ENCODE measurements at regions of chr1 and their contacts with region 1.

Region 1: GRCh38 chr1:182962554-182963115 is 9.7 kb upstream of the SHCBP1L start:
- DNase-seq: peak; percentile 81
- ATAC-seq: peak; percentile 100
- H3K4me3 ChIP-seq: peak overlapping the region in 4 of 5 experiments; percentile 3 to 48 (median 25)
- H3K4me3 Mint-ChIP-seq: peak overlapping the region; percentile 54
- H3K27ac ChIP-seq: no peak overlapping the region
- H3K27ac Mint-ChIP-seq: peak overlapping the region; percentile 64
- H3K4me1 ChIP-seq: peaks cover 5 to 7% of the 10 kb centered on the region in 2 donors
- H3K4me1 Mint-ChIP-seq: peaks cover 8% of the 10 kb centered on the region
- H3K27me3 ChIP-seq: peaks cover 0 to 5% (median 0%) of the 10 kb centered on the region in 4 experiments
- H3K27me3 Mint-ChIP-seq: peaks cover 4% of the 10 kb centered on the region
- CTCF ChIP-seq: peak; percentile 89

Region 2: DNA sequence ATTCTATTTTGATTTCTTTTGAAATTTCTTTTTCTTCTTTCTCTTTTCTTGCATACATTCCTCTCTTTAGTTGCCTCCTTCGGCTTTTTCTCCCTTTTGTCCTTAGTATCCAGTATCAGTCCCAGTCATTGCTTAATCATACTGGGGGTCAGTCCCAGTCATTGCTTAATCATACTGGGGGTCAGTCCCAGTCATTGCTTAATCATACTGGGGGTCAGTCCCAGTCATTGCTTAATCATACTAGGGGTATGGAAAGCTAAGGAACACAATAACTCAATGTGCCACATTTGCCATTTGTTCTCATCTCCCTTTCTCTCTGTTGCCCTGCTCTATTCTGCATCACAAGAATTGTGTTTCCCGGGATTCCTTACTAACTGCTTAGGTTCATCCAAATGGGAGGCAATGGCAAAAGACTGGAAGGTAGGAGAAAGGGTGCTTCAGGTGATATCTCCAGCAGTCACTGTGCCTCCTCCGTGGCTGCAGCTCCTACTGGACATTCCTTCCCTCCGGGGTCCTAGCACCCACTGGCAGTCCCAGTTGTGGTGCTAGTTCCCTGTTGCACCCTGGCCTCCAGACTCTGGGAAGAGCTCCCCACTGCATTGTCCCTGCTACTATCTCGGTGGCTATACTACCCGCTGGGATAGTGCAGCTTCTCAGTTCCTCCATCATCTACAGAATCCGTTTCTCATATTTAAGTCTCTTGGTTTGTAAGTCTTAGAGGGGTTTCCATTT is 27.9 kb after region 1 on chr1:
- CTCF ChIA-PET with region 1: no interaction called
- POLR2A ChIA-PET with region 1: no interaction called
- intact Hi-C with region 1: no loop called
- DNase-seq: no peak
- ATAC-seq: no peak
- H3K4me3 ChIP-seq: no peak overlapping the region
- H3K4me3 Mint-ChIP-seq: no peak overlapping the region
- H3K27ac ChIP-seq: no peak overlapping the region
- H3K27ac Mint-ChIP-seq: no peak overlapping the region
- H3K4me1 ChIP-seq: no peaks in the 10 kb centered on the region
- H3K4me1 Mint-ChIP-seq: no peaks in the 10 kb centered on the region
- H3K27me3 ChIP-seq: peaks cover 0 to 8% (median 4%) of the 10 kb centered on the region in 4 experiments
- H3K27me3 Mint-ChIP-seq: peaks cover 24% of the 10 kb centered on the region
- CTCF ChIP-seq: no peak

Region 3: DNA sequence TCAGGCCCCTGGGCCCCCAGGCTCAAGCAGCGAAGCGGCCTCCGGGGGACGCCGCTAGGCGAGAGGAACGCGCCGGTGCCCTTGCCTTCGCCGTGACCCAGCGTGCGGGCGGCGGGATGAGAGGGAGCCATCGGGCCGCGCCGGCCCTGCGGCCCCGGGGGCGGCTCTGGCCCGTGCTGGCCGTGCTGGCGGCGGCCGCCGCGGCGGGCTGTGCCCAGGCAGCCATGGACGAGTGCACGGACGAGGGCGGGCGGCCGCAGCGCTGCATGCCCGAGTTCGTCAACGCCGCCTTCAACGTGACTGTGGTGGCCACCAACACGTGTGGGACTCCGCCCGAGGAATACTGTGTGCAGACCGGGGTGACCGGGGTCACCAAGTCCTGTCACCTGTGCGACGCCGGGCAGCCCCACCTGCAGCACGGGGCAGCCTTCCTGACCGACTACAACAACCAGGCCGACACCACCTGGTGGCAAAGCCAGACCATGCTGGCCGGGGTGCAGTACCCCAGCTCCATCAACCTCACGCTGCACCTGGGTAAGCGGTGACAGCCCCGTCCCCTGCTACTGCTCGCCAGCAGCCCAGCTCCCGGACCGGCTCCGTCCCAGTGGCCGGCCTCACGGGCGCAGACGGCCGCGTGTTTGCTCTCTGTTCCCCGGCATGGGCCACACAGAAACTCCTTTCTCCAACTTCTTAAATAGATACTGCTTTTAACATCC is 61.1 kb after region 1 on chr1:
- CTCF ChIA-PET with region 1: interaction called, 19 read pairs
- POLR2A ChIA-PET with region 1: no interaction called
- intact Hi-C with region 1: loop called (anchors 1 kb)
- DNase-seq: peak; percentile 84
- ATAC-seq: peak; percentile 73
- H3K4me3 ChIP-seq: peak overlapping the region; percentile 45 to 82 (median 68)
- H3K4me3 Mint-ChIP-seq: peak overlapping the region; percentile 99
- H3K27ac ChIP-seq: peak overlapping the region in 1 of 2 donors; percentile 20
- H3K27ac Mint-ChIP-seq: peak overlapping the region; percentile 97
- H3K4me1 ChIP-seq: peaks cover 19 to 21% of the 10 kb centered on the region in 2 donors
- H3K4me1 Mint-ChIP-seq: peaks cover 45% of the 10 kb centered on the region
- H3K27me3 ChIP-seq: no peaks in the 10 kb centered on the region
- H3K27me3 Mint-ChIP-seq: no peaks in the 10 kb centered on the region
- CTCF ChIP-seq: peak; percentile 75

Region 4: DNA sequence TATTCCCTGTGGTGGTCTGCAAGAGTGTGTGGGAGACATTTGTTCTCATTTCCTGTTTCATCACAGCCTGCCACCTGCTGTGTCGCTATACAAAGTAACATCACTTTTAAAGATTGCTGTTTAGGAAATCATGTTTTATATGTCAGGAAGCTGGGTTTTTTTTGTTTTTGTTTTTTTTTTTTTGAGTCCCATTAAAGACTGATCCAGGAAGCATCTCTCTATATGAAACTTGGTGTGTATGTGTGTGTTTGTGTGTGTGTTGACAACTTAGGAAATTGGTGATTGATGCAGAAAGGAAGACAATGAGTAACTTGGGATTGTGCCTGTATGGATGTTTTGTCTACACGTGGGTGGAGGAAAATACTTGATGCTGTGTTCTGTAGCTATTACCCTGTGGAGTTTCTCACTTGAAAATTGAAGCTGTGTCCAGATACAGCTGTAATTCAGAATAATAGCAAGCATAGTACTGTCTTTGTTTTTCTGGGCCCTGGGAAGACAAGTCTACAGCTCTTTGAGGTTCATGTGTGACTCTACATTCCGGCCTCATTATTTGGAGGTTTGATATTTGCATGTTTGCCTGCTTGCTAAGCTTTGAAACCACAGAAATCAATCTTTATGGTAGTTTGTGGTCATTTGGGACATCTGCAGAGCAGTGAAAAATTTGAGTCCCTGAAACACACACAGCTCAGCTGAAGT is 108.4 kb after region 1 on chr1:
- CTCF ChIA-PET with region 1: interaction called, 11 read pairs
- POLR2A ChIA-PET with region 1: no interaction called
- intact Hi-C with region 1: loop called (anchors 1 kb)
- DNase-seq: peak; percentile 37
- ATAC-seq: peak; percentile 70
- H3K4me3 ChIP-seq: peak overlapping the region in 1 of 5 experiments; percentile 11
- H3K4me3 Mint-ChIP-seq: peak overlapping the region; percentile 55
- H3K27ac ChIP-seq: no peak overlapping the region
- H3K27ac Mint-ChIP-seq: peak overlapping the region; percentile 64
- H3K4me1 ChIP-seq: peaks cover 21 to 22% of the 10 kb centered on the region in 2 donors
- H3K4me1 Mint-ChIP-seq: peaks cover 36% of the 10 kb centered on the region
- H3K27me3 ChIP-seq: peaks cover 0 to 3% (median 0%) of the 10 kb centered on the region in 4 experiments
- H3K27me3 Mint-ChIP-seq: peaks cover 6% of the 10 kb centered on the region
- CTCF ChIP-seq: no peak

Region 5: GRCh38 chr1:183101841-183102276 is 139.2 kb after region 1 on chr1:
- CTCF ChIA-PET with region 1: interaction called, 3 read pairs
- POLR2A ChIA-PET with region 1: no interaction called
- intact Hi-C with region 1: loop called (anchors 10 kb)
- DNase-seq: peak; percentile 57
- ATAC-seq: peak; percentile 69
- H3K4me3 ChIP-seq: no peak overlapping the region
- H3K4me3 Mint-ChIP-seq: peak overlapping the region; percentile 42
- H3K27ac ChIP-seq: no peak overlapping the region
- H3K27ac Mint-ChIP-seq: peak overlapping the region; percentile 38
- H3K4me1 ChIP-seq: peaks cover 11 to 13% of the 10 kb centered on the region in 2 donors
- H3K4me1 Mint-ChIP-seq: peaks cover 18% of the 10 kb centered on the region
- H3K27me3 ChIP-seq: no peaks in the 10 kb centered on the region
- H3K27me3 Mint-ChIP-seq: no peaks in the 10 kb centered on the region
- CTCF ChIP-seq: no peak

Region 6: DNA sequence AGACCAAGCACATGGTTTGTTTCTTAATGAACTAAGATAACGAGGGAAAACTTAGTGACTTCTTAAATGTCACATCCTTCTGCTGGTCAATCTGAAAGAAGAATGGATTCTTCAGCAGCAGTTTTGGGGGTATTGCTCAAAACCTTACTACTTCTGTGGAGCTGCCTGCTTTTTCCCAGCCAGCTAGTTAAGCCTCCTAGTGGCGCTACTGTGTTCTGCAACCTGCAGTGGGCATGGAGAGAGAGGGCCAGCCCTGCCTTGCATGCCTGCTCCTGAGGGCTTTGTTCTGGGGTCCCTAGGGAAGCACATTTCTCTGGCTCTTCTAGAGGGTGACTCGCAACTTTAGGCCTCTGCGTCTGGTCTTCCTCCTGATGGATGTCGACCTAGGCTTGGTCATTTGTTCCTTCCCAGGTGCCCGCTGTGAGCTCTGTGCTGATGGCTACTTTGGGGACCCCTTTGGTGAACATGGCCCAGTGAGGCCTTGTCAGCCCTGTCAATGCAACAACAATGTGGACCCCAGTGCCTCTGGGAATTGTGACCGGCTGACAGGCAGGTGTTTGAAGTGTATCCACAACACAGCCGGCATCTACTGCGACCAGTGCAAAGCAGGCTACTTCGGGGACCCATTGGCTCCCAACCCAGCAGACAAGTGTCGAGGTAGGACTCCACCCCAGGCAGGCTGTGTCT is 265.5 kb after region 1 on chr1:
- CTCF ChIA-PET with region 1: interaction called, 45 read pairs
- POLR2A ChIA-PET with region 1: no interaction called
- intact Hi-C with region 1: loop called (anchors 1 kb)
- DNase-seq: peak; percentile 39
- ATAC-seq: peak; percentile 47
- H3K4me3 ChIP-seq: no peak overlapping the region
- H3K4me3 Mint-ChIP-seq: no peak overlapping the region
- H3K27ac ChIP-seq: no peak overlapping the region
- H3K27ac Mint-ChIP-seq: no peak overlapping the region
- H3K4me1 ChIP-seq: no peaks in the 10 kb centered on the region
- H3K4me1 Mint-ChIP-seq: peaks cover 5% of the 10 kb centered on the region
- H3K27me3 ChIP-seq: no peaks in the 10 kb centered on the region
- H3K27me3 Mint-ChIP-seq: peaks cover 5% of the 10 kb centered on the region
- CTCF ChIP-seq: peak; percentile 72

Region 7: GRCh38 chr1:183281553-183282091 is 319.0 kb after region 1 on chr1:
- CTCF ChIA-PET with region 1: interaction called, 32 read pairs
- POLR2A ChIA-PET with region 1: no interaction called
- intact Hi-C with region 1: loop called (anchors 1 kb)
- DNase-seq: peak; percentile 74
- ATAC-seq: peak; percentile 79
- H3K4me3 ChIP-seq: no peak overlapping the region
- H3K4me3 Mint-ChIP-seq: no peak overlapping the region
- H3K27ac ChIP-seq: no peak overlapping the region
- H3K27ac Mint-ChIP-seq: no peak overlapping the region
- H3K4me1 ChIP-seq: no peaks in the 10 kb centered on the region
- H3K4me1 Mint-ChIP-seq: no peaks in the 10 kb centered on the region
- H3K27me3 ChIP-seq: peaks cover 0 to 4% (median 0%) of the 10 kb centered on the region in 4 experiments
- H3K27me3 Mint-ChIP-seq: peaks cover 21% of the 10 kb centered on the region
- CTCF ChIP-seq: peak; percentile 86

Region 8: GRCh38 chr1:183685112-183685713 is 722.6 kb after region 1 on chr1:
- CTCF ChIA-PET with region 1: interaction called, 5 read pairs
- POLR2A ChIA-PET with region 1: no interaction called
- intact Hi-C with region 1: loop called (anchors 1 kb)
- DNase-seq: peak; percentile 62
- ATAC-seq: peak; percentile 36
- H3K4me3 ChIP-seq: no peak overlapping the region
- H3K4me3 Mint-ChIP-seq: no peak overlapping the region
- H3K27ac ChIP-seq: no peak overlapping the region
- H3K27ac Mint-ChIP-seq: no peak overlapping the region
- H3K4me1 ChIP-seq: no peaks in the 10 kb centered on the region
- H3K4me1 Mint-ChIP-seq: no peaks in the 10 kb centered on the region
- H3K27me3 ChIP-seq: no peaks in the 10 kb centered on the region
- H3K27me3 Mint-ChIP-seq: peaks cover 15% of the 10 kb centered on the region
- CTCF ChIP-seq: peak; percentile 92

Measured in B cell (primary cell).